ENCODE measurements at regions of chr3 and their contacts with region 1.

Region 1: DNA sequence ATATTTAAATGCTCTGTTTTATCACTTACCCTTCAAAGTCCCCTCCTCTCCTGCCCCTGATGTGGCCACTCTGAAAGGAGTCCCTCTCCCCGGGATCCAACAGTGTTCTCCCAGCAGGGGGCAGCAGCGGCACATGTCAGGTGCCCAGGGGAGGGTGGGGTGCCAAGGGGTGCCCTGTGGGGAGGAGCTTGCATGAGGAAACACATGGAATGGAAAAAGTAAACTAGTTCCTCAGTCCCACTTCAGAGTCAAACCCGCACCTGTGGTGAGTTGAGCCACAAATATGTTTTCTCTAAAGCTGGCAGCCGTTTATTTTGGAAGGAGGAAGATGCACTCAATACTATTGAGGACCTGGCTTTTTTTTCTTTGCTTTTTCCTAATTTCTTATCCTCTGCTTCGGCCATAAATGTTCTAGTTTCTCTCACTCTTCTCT is 30.1 kb upstream of the NRROS start:
- DNase-seq: peak; percentile 82 to 91 (median 87)
- H3K4me3 ChIP-seq: no peak overlapping the region
- H3K4me3 Mint-ChIP-seq: peak overlapping the region; percentile 65 to 79 (median 72)
- H3K27ac ChIP-seq: peak overlapping the region; percentile 37
- H3K27ac Mint-ChIP-seq: peak overlapping the region; percentile 79 to 96 (median 93)
- H3K4me1 ChIP-seq: peaks cover 43% of the 10 kb centered on the region
- H3K4me1 Mint-ChIP-seq: peaks cover 32 to 50% (median 40%) of the 10 kb centered on the region in 4 donors
- H3K27me3 ChIP-seq: no peaks in the 10 kb centered on the region
- H3K27me3 Mint-ChIP-seq: no peaks in the 10 kb centered on the region

Region 2: GRCh38 chr3:196317687-196318467 is 291.5 kb before region 1 on chr3 and contains the start of gene DYNLT2B:
- CTCF ChIA-PET with region 1: no interaction called
- POLR2A ChIA-PET with region 1: no interaction called
- intact Hi-C with region 1: no loop called
- DNase-seq: peak; percentile 88 to 91 (median 90)
- H3K4me3 ChIP-seq: peak within 1 kb of the TSS; percentile 52 to 88
- H3K4me3 Mint-ChIP-seq: peak within 1 kb of the TSS; percentile 93 to 97 (median 94)
- H3K27ac ChIP-seq: peak within 1 kb of the TSS; percentile 86
- H3K27ac Mint-ChIP-seq: peak within 1 kb of the TSS; percentile 93 to 98 (median 98)
- H3K4me1 ChIP-seq: peaks cover 11% of the 10 kb centered on the region
- H3K4me1 Mint-ChIP-seq: peaks cover 1 to 16% (median 8%) of the 10 kb centered on the region in 4 donors
- H3K27me3 ChIP-seq: no peaks in the 10 kb centered on the region
- H3K27me3 Mint-ChIP-seq: no peaks in the 10 kb centered on the region
- total RNA-seq, gene DYNLT2B: 6.0 to 7.4 TPM

Region 3: DNA sequence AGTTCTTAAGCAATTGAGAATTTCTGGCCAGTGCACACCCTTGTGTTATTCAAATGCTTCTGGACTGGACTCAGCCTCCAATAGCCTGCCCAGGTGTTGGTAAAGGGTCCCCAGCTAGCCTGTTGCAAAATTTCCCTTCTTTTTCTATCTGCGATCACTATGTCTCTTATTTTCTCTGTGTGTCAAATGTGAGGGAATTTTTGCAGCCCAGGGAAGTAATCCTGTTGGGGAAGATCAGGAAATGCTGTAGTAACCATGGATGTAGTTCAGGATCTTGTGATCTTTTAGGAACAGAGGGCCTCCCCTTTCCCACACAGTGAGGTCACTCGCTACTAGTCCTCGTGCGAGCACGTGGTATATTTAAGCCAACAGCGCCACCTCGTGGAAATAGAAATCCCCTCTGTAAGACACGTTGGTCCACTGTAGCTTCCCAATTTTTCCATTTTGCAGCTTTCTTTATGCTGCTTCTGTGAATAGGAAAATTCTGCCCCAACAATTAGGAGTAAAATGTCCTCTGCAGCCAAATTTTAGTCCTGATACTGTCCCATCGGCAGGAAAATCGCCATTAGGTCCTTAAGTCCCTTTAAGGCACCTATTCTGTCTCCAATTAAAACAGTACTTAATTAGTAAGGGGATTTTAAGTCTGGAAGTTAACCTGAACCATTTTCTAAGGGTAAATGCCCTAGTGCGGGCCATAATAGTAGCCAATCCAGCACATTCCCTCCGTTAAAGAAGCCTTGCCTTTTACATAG is 90.2 kb before region 1 on chr3:
- CTCF ChIA-PET with region 1: no interaction called
- POLR2A ChIA-PET with region 1: no interaction called
- intact Hi-C with region 1: no loop called
- DNase-seq: peak; percentile 39 to 62 (median 48)
- H3K4me3 ChIP-seq: no peak overlapping the region
- H3K4me3 Mint-ChIP-seq: no peak overlapping the region
- H3K27ac ChIP-seq: no peak overlapping the region
- H3K27ac Mint-ChIP-seq: peak overlapping the region in 2 of 7 donors; percentile 65 to 74
- H3K4me1 ChIP-seq: no peaks in the 10 kb centered on the region
- H3K4me1 Mint-ChIP-seq: no peaks in the 10 kb centered on the region
- H3K27me3 ChIP-seq: no peaks in the 10 kb centered on the region
- H3K27me3 Mint-ChIP-seq: peaks cover 0 to 2% of the 10 kb centered on the region in 2 donors

Region 4: GRCh38 chr3:196620161-196620604 is 10.8 kb after region 1 on chr3:
- CTCF ChIA-PET with region 1: interaction called, 10 read pairs
- POLR2A ChIA-PET with region 1: interaction called, 3 read pairs
- intact Hi-C with region 1: no loop called
- DNase-seq: no peak
- H3K4me3 ChIP-seq: no peak overlapping the region
- H3K4me3 Mint-ChIP-seq: peak overlapping the region in 3 of 8 donors; percentile 34 to 62 (median 43)
- H3K27ac ChIP-seq: no peak overlapping the region
- H3K27ac Mint-ChIP-seq: peak overlapping the region in 3 of 7 donors; percentile 36 to 75 (median 61)
- H3K4me1 ChIP-seq: peaks cover 13% of the 10 kb centered on the region
- H3K4me1 Mint-ChIP-seq: peaks cover 12 to 26% (median 16%) of the 10 kb centered on the region in 4 donors
- H3K27me3 ChIP-seq: no peaks in the 10 kb centered on the region
- H3K27me3 Mint-ChIP-seq: no peaks in the 10 kb centered on the region

Region 5: GRCh38 chr3:196639483-196640296 is 30.3 kb after region 1 on chr3 and contains the start of gene NRROS:
- CTCF ChIA-PET with region 1: interaction called, 63 read pairs
- POLR2A ChIA-PET with region 1: interaction called, 66 read pairs
- intact Hi-C with region 1: loop called (anchors 1 kb)
- DNase-seq: peak; percentile 47 to 73 (median 52)
- H3K4me3 ChIP-seq: peak within 1 kb of the TSS; percentile 75 to 89
- H3K4me3 Mint-ChIP-seq: peak within 1 kb of the TSS; percentile 80 to 95 (median 92)
- H3K27ac ChIP-seq: peak within 1 kb of the TSS; percentile 77
- H3K27ac Mint-ChIP-seq: peak within 1 kb of the TSS; percentile 75 to 97 (median 95)
- H3K4me1 ChIP-seq: peaks cover 71% of the 10 kb centered on the region
- H3K4me1 Mint-ChIP-seq: peaks cover 48 to 91% (median 67%) of the 10 kb centered on the region in 4 donors
- H3K27me3 ChIP-seq: no peaks in the 10 kb centered on the region
- H3K27me3 Mint-ChIP-seq: no peaks in the 10 kb centered on the region
- total RNA-seq, gene NRROS: 18.7 to 20.0 TPM

Region 6: DNA sequence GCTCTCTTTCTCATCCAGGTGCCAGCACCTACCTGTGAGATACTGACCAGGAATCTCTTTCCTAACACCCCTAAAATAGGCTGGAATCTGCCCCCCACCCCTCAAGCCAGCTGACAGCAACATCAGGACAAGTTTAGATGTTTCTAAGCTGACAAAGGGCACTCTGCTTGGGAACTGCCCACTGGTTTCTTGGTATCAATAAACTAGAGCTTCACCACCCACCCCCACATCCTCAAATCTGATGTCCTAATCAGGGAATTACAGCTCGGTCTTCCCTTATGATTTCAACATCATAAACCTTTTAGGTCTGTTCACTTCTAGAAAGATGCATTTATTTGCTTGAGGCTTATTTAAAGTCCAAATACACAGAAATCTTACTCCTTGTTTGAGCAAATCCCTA is 68.0 kb after region 1 on chr3:
- CTCF ChIA-PET with region 1: interaction called, 32 read pairs
- POLR2A ChIA-PET with region 1: interaction called, 9 read pairs
- intact Hi-C with region 1: no loop called
- DNase-seq: no peak
- H3K4me3 ChIP-seq: no peak overlapping the region
- H3K4me3 Mint-ChIP-seq: peak overlapping the region in 1 of 8 donors; percentile 36
- H3K27ac ChIP-seq: no peak overlapping the region
- H3K27ac Mint-ChIP-seq: peak overlapping the region in 3 of 7 donors; percentile 29 to 64 (median 59)
- H3K4me1 ChIP-seq: peaks cover 16% of the 10 kb centered on the region
- H3K4me1 Mint-ChIP-seq: peaks cover 14 to 25% (median 15%) of the 10 kb centered on the region in 4 donors
- H3K27me3 ChIP-seq: no peaks in the 10 kb centered on the region
- H3K27me3 Mint-ChIP-seq: no peaks in the 10 kb centered on the region

Region 7: DNA sequence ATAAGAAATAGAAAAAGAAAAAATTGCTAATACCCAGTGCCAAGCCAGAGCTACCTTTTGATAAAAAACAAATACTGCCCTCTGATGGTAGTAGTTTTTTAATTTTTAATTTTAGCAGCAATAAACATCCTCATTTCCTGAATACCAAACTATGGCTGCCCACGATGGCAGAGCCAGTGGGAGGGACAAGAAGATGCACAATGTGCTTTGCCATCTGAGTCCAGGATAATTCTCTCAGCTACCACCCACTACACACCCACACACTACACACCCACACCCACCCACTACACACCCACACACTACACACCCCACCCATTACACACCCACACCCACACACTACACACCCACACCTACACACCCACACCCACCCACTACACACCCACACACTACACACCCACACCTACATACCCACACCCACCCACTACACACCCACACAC is 84.9 kb after region 1 on chr3:
- CTCF ChIA-PET with region 1: interaction called, 360 read pairs
- POLR2A ChIA-PET with region 1: interaction called, 8 read pairs
- intact Hi-C with region 1: loop called (anchors 2 kb)
- DNase-seq: peak; percentile 35 to 53 (median 50)
- H3K4me3 ChIP-seq: no peak overlapping the region
- H3K4me3 Mint-ChIP-seq: peak overlapping the region in 1 of 8 donors; percentile 5
- H3K27ac ChIP-seq: no peak overlapping the region
- H3K27ac Mint-ChIP-seq: peak overlapping the region in 4 of 7 donors; percentile 42 to 74 (median 62)
- H3K4me1 ChIP-seq: peaks cover 12% of the 10 kb centered on the region
- H3K4me1 Mint-ChIP-seq: peaks cover 0 to 2% (median 0%) of the 10 kb centered on the region in 4 donors
- H3K27me3 ChIP-seq: no peaks in the 10 kb centered on the region
- H3K27me3 Mint-ChIP-seq: no peaks in the 10 kb centered on the region

Measured in CD4-positive, alpha-beta memory T cell (primary cell).